Activated naive CD4-positive, alpha-beta T cell treated with anti-CD3 and anti-CD28 coated beads for 36 hours (primary cell): ENCODE measurements at regions of chr9 and their contacts with region 1.

Region 1: DNA sequence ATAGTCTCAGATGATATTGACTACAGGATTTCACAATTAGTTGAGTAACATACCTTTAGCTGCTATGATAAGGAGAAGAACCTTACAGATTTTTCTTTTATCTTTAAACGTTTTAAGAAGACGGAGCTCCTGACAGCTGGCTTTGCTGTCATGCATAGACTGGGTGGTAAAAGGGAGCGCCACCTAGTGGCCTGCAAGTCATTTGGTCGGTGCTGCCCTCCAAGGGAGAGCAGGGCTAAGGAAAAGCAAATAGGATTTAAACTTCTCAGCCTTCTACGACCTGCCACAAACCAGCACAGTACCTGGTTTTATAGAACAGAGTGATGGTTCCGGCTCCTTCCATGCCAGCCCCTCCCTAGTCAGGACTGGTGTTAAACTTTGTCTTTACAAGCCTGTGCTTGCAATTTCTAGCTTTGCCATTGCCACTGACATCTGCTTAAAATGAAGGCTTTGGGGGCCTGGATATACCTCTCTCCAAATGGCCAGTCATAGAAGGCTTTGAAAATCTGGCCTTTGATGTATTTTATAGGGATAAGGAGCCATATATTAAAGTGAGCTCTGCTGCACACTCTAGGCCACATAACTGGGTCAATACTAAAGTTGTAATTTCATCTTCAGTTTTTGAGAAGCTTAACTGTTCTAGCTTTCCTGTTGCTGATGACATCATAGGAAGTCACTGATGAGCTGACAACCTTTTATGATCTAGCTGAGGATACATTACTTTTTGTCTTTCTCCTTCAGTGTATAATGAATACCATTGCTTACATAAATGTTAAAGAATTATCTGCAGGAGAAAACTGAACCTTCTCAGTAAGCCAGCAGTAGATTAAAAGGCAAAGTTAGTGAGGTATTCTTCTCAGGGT is 31.1 kb upstream of the ADAMTSL1 start:
- DNase-seq: peak; percentile 73
- H3K4me3 Mint-ChIP-seq: no peak overlapping the region
- H3K27ac Mint-ChIP-seq: no peak overlapping the region
- H3K4me1 Mint-ChIP-seq: peaks cover 4% of the 10 kb centered on the region
- H3K27me3 Mint-ChIP-seq: peaks cover 18% of the 10 kb centered on the region

Region 2: GRCh38 chr9:17531642-17532254 is 911.1 kb before region 1 on chr9:
- CTCF ChIA-PET with region 1: no interaction called
- intact Hi-C with region 1: loop called (anchors 5 kb)
- DNase-seq: peak; percentile 52
- H3K4me3 Mint-ChIP-seq: no peak overlapping the region
- H3K27ac Mint-ChIP-seq: no peak overlapping the region
- H3K4me1 Mint-ChIP-seq: no peaks in the 10 kb centered on the region
- H3K27me3 Mint-ChIP-seq: no peaks in the 10 kb centered on the region

Region 3: DNA sequence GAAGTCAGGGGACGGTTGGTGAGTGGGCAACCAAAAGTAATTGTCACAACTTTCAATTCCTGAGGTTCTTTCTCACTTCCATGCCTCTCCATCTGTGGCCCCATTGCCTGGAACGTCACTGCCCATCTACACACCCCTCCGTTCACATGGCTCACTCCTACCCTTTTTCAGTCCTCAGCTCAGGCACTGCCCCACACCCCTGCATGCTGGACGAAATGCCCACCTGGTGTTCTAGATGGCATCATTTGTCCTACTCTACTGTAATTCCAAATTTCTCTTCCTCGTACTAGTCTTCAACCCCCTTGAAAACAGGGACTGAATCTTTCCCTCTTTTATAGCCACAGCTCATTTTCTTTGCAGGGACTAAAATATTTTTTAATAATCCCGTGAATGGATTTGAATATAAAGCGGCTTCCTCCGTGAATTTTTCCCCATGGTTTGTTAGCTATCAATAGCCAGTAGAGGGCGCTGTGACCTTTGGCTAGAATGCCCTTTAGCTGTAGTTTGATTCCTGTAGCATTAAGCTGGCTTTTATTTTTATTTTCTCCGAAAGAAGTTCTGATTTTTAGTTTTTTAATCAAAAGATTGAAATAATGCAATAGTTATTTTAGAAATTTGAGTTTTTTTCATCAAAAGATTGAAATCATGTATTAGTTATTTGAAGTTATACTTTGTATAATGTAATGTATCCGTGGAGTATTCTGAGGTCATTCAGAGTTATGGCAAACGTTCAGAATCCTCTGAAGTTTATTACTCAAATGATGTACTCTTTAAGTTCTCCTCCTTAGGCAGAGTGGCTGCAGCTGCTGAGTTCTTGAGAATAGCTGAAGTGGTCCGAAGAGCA is 631.9 kb before region 1 on chr9:
- CTCF ChIA-PET with region 1: no interaction called
- intact Hi-C with region 1: loop called (anchors 1 kb)
- DNase-seq: peak; percentile 63
- H3K4me3 Mint-ChIP-seq: no peak overlapping the region
- H3K27ac Mint-ChIP-seq: no peak overlapping the region
- H3K4me1 Mint-ChIP-seq: no peaks in the 10 kb centered on the region
- H3K27me3 Mint-ChIP-seq: peaks cover 5% of the 10 kb centered on the region

Region 4: DNA sequence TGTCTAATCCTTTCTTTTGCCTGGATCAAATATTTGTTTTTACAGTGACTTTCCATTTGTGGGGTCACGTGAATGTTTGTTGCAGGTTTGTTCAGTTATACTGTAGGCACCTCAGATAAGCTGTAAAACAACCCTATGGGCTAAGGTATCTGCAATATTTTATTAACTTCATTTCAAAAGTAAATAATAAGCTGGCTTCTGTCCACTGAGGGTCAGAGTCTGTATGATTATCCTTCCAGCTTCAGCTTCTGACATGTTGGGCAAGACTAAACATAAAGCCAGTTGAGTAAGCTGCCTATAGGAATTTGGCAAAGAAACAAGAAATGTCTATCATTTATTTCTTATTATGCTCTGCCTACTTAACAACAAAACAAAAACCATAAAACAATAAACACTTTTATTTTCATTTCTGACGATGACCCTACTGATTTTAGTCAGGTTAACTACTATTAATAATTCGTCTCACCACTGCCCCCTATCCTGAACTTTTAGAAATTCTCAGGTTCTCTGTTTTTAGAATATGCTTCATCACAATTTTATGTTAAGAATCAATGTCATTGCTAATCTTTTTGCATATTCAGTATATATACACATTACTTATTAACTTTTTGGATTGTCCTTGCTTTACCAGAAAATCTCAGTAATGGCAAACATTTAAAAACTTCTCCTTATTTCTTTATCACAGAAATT is 382.5 kb before region 1 on chr9:
- CTCF ChIA-PET with region 1: no interaction called
- intact Hi-C with region 1: no loop called
- DNase-seq: no peak
- H3K4me3 Mint-ChIP-seq: no peak overlapping the region
- H3K27ac Mint-ChIP-seq: no peak overlapping the region
- H3K4me1 Mint-ChIP-seq: no peaks in the 10 kb centered on the region
- H3K27me3 Mint-ChIP-seq: no peaks in the 10 kb centered on the region

Region 5: GRCh38 chr9:18255158-18255629 is 187.7 kb before region 1 on chr9:
- CTCF ChIA-PET with region 1: interaction called, 59 read pairs
- intact Hi-C with region 1: loop called (anchors 1 kb)
- DNase-seq: peak; percentile 86
- H3K4me3 Mint-ChIP-seq: no peak overlapping the region
- H3K27ac Mint-ChIP-seq: no peak overlapping the region
- H3K4me1 Mint-ChIP-seq: peaks cover 2% of the 10 kb centered on the region
- H3K27me3 Mint-ChIP-seq: peaks cover 3% of the 10 kb centered on the region

Region 6: DNA sequence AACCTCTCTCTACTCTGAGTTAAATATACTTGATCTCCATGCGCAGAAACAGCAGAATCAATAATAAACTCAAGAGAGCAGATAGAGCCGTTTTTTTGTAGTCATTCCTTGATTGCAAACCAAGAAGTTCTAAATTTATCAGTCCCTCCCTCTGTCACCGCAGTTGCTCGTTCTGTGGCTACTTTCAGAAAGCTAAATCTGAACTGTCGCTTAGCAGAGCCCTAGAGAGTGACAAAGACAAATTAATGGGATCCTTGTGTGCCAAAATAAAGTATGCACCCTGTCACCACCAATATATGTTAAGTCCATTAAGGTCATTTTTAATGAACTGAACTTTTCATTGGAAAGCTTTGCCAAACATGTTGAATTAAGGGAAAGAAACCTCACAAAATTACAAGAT is 249.4 kb after region 1 on chr9:
- CTCF ChIA-PET with region 1: no interaction called
- intact Hi-C with region 1: no loop called
- DNase-seq: no peak
- H3K4me3 Mint-ChIP-seq: no peak overlapping the region
- H3K27ac Mint-ChIP-seq: no peak overlapping the region
- H3K4me1 Mint-ChIP-seq: no peaks in the 10 kb centered on the region
- H3K27me3 Mint-ChIP-seq: peaks cover 4% of the 10 kb centered on the region

Region 7: GRCh38 chr9:19028835-19029451 is 586.1 kb after region 1 on chr9:
- CTCF ChIA-PET with region 1: no interaction called
- intact Hi-C with region 1: loop called (anchors 2 kb)
- DNase-seq: peak; percentile 54
- H3K4me3 Mint-ChIP-seq: no peak overlapping the region
- H3K27ac Mint-ChIP-seq: no peak overlapping the region
- H3K4me1 Mint-ChIP-seq: peaks cover 7% of the 10 kb centered on the region
- H3K27me3 Mint-ChIP-seq: peaks cover 10% of the 10 kb centered on the region